Astrocyte of the cerebellum (primary cell): ENCODE measurements at regions of chr2 and their contacts with region 1.

Region 1: GRCh38 chr2:217387911-217388417 is 528.1 kb upstream of the TNP1 start:
- DNase-seq: no peak
- H3K4me3 ChIP-seq: no peak overlapping the region
- CTCF ChIP-seq: no peak

Region 2: GRCh38 chr2:217451666-217452065 is 63.7 kb after region 1 on chr2:
- in situ Hi-C with region 1: loop called (anchors 5 kb)
- DNase-seq: no peak
- H3K4me3 ChIP-seq: no peak overlapping the region
- CTCF ChIP-seq: no peak